Psoas muscle (tissue), 8 donors: ENCODE measurements at regions of chr18 and their contacts with region 1.

Region 1: DNA sequence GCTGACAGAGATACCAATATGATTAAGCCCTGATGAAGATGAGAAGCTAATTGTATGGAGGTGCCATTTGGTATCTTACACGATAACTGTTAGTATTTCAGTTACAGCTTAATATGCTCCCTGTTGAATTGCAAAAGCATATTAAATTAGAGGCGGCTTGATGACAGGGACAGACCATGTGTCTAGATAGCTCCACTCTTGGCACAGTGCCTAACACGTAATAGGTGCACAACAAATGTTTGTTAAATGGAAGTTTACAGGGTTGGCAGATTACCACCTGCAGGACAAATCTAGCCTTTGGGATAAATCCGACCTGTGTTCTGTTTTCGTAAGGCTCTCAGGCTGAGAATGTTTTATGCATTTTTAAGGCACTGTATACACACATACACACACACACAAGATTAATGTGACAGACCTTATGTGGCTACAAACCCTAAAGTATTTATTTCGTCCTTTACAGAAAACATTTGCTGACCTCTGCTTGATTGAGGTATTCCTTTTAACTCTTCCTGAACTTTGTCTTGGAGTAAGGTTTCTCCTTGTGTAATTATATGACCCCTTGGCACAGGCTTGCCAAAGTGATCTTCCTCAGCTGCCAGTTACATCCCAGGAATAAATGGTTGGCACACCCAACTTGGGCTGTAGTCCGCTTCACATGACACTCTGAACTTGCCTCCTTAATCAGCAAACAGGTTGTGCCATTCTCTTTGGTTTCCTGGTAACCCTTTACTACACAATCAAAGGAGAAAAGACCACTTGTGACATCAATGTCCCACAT is 348.9 kb downstream of the HRH4 start:
- DNase-seq: no peak
- ATAC-seq: no peak
- H3K4me3 ChIP-seq: no peak overlapping the region
- H3K27ac ChIP-seq: no peak overlapping the region
- H3K4me1 ChIP-seq: no peaks in the 10 kb centered on the region
- H3K27me3 ChIP-seq: no peaks in the 10 kb centered on the region
- CTCF ChIP-seq: no peak

Region 2: GRCh38 chr18:24734058-24734457 is 75.3 kb before region 1 on chr18:
- intact Hi-C with region 1: no loop called
- DNase-seq: no peak
- ATAC-seq: no peak
- H3K4me3 ChIP-seq: no peak overlapping the region
- H3K27ac ChIP-seq: no peak overlapping the region
- H3K4me1 ChIP-seq: no peaks in the 10 kb centered on the region
- H3K27me3 ChIP-seq: peaks cover 0 to 31% (median 0%) of the 10 kb centered on the region in 3 donors
- CTCF ChIP-seq: no peak

Region 3: DNA sequence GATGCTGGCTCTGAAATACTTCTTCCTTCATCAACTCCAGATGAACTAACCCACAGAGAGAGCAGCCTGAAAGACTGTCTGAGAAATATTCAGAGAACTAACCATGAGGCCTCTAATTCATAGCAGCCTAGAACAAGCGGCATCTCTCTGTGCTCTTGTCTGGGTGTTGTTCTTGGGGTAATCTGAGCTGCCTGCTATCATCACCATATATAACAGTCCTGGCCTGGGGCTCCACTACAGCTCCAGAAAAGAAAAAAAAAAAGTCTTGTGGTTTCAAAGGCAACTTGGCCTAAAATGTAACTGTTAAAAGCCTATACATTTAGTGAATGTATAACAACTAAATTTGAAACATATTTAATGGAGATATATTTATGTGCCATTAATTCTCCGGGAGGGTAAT is 54.8 kb before region 1 on chr18:
- intact Hi-C with region 1: no loop called
- DNase-seq: no peak
- ATAC-seq: no peak
- H3K4me3 ChIP-seq: no peak overlapping the region
- H3K27ac ChIP-seq: no peak overlapping the region
- H3K4me1 ChIP-seq: no peaks in the 10 kb centered on the region
- H3K27me3 ChIP-seq: peaks cover 0 to 2% (median 0%) of the 10 kb centered on the region in 3 donors
- CTCF ChIP-seq: no peak

Region 4: GRCh38 chr18:24791751-24792560 is 17.4 kb before region 1 on chr18:
- intact Hi-C with region 1: loop called in 1 of 2 experiments (anchors 2 kb)
- DNase-seq: no peak
- ATAC-seq: no peak
- H3K4me3 ChIP-seq: no peak overlapping the region
- H3K27ac ChIP-seq: no peak overlapping the region
- H3K4me1 ChIP-seq: no peaks in the 10 kb centered on the region
- H3K27me3 ChIP-seq: no peaks in the 10 kb centered on the region
- CTCF ChIP-seq: no peak